CD4-positive, alpha-beta memory T cell (primary cell): ENCODE measurements at regions of chr12 and their contacts with region 1.

Region 1: GRCh38 chr12:111942557-111942956 is 70.4 kb downstream of the TMEM116 start:
- DNase-seq: no peak
- H3K4me3 ChIP-seq: no peak overlapping the region
- H3K4me3 Mint-ChIP-seq: no peak overlapping the region
- H3K27ac ChIP-seq: no peak overlapping the region
- H3K27ac Mint-ChIP-seq: peak overlapping the region in 1 of 7 donors; percentile 46
- H3K4me1 ChIP-seq: peaks cover 16% of the 10 kb centered on the region
- H3K4me1 Mint-ChIP-seq: peaks cover 8 to 17% (median 11%) of the 10 kb centered on the region in 4 donors
- H3K27me3 ChIP-seq: no peaks in the 10 kb centered on the region
- H3K27me3 Mint-ChIP-seq: no peaks in the 10 kb centered on the region

Region 2: GRCh38 chr12:111905502-111905901 is 37.1 kb before region 1 on chr12:
- CTCF ChIA-PET with region 1: no interaction called
- POLR2A ChIA-PET with region 1: no interaction called
- intact Hi-C with region 1: no loop called
- DNase-seq: no peak
- H3K4me3 ChIP-seq: no peak overlapping the region
- H3K4me3 Mint-ChIP-seq: no peak overlapping the region
- H3K27ac ChIP-seq: no peak overlapping the region
- H3K27ac Mint-ChIP-seq: peak overlapping the region in 1 of 7 donors; percentile 52
- H3K4me1 ChIP-seq: no peaks in the 10 kb centered on the region
- H3K4me1 Mint-ChIP-seq: peaks cover 0 to 8% (median 2%) of the 10 kb centered on the region in 4 donors
- H3K27me3 ChIP-seq: no peaks in the 10 kb centered on the region
- H3K27me3 Mint-ChIP-seq: no peaks in the 10 kb centered on the region

Region 3: DNA sequence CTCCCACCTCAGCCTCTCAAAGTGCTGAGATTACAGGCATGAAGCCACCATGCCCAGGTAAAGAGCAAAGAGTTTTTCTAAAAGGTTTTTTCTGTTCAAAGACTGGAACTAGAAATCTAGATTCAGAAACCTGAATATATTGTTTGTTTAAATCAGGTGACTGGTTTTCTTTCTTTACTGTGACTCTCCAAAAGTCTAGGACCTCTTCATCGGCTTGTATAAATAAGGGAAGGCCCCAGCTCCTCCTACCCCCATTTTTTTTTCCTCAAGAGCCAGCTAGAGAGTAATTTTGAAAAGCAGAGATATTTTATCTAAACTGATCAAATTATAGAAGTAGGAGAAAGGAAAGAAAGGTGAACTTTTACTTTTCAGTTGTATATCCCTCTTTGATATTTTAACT is 22.4 kb after region 1 on chr12:
- CTCF ChIA-PET with region 1: no interaction called
- POLR2A ChIA-PET with region 1: no interaction called
- intact Hi-C with region 1: no loop called
- DNase-seq: no peak
- H3K4me3 ChIP-seq: no peak overlapping the region
- H3K4me3 Mint-ChIP-seq: no peak overlapping the region
- H3K27ac ChIP-seq: no peak overlapping the region
- H3K27ac Mint-ChIP-seq: peak overlapping the region in 1 of 7 donors; percentile 55
- H3K4me1 ChIP-seq: peaks cover 8% of the 10 kb centered on the region
- H3K4me1 Mint-ChIP-seq: peaks cover 24 to 55% (median 33%) of the 10 kb centered on the region in 4 donors
- H3K27me3 ChIP-seq: no peaks in the 10 kb centered on the region
- H3K27me3 Mint-ChIP-seq: no peaks in the 10 kb centered on the region

Region 4: GRCh38 chr12:112005419-112006395 is 63.1 kb after region 1 on chr12:
- CTCF ChIA-PET with region 1: interaction called, 17 read pairs
- POLR2A ChIA-PET with region 1: interaction called, 4 read pairs
- intact Hi-C with region 1: no loop called
- DNase-seq: no peak
- H3K4me3 ChIP-seq: no peak overlapping the region
- H3K4me3 Mint-ChIP-seq: peak overlapping the region in 4 of 8 donors; percentile 8 to 41 (median 36)
- H3K27ac ChIP-seq: no peak overlapping the region
- H3K27ac Mint-ChIP-seq: peak overlapping the region; percentile 10 to 85 (median 69)
- H3K4me1 ChIP-seq: peaks cover 87% of the 10 kb centered on the region
- H3K4me1 Mint-ChIP-seq: peaks cover 36 to 65% (median 50%) of the 10 kb centered on the region in 4 donors
- H3K27me3 ChIP-seq: no peaks in the 10 kb centered on the region
- H3K27me3 Mint-ChIP-seq: no peaks in the 10 kb centered on the region

Region 5: DNA sequence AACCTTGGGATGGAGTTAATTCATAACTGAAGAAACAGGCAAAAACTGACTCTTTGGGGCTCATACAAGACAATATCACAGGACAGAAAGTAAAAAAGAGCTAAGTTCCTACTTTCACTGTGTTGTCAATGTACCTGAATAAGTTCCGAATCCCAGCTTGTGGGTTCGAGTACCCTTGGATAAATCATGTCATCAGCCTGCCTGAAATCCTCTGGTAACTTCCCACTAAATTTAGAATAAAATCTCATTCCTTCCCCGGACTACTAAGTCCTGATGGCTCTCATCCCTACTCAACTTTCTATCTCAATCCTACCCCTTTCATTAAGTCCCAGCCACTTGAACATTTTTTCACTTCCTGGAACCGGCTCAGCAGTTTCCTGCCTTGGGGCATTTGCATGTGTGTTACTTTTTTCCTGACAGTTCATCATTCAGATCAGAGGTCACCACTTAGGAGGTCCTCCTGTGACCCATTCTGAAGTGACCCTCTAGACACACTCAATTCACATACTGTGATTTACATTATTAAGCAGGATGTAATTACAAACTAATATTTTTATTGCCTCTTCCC is 83.3 kb after region 1 on chr12:
- CTCF ChIA-PET with region 1: interaction called, 17 read pairs
- POLR2A ChIA-PET with region 1: no interaction called
- intact Hi-C with region 1: no loop called
- DNase-seq: no peak
- H3K4me3 ChIP-seq: no peak overlapping the region
- H3K4me3 Mint-ChIP-seq: no peak overlapping the region
- H3K27ac ChIP-seq: no peak overlapping the region
- H3K27ac Mint-ChIP-seq: peak overlapping the region; percentile 24 to 92 (median 68)
- H3K4me1 ChIP-seq: peaks cover 15% of the 10 kb centered on the region
- H3K4me1 Mint-ChIP-seq: peaks cover 20 to 21% (median 21%) of the 10 kb centered on the region in 4 donors
- H3K27me3 ChIP-seq: no peaks in the 10 kb centered on the region
- H3K27me3 Mint-ChIP-seq: no peaks in the 10 kb centered on the region